ENCODE measurements at regions of chr12 and their contacts with region 1.

Region 1: GRCh38 chr12:28172434-28173030 is 17.7 kb upstream of the CCDC91 start:
- DNase-seq: peak; percentile 24
- H3K4me3 ChIP-seq: no peak overlapping the region
- CTCF ChIP-seq: peak; percentile 66

Region 2: DNA sequence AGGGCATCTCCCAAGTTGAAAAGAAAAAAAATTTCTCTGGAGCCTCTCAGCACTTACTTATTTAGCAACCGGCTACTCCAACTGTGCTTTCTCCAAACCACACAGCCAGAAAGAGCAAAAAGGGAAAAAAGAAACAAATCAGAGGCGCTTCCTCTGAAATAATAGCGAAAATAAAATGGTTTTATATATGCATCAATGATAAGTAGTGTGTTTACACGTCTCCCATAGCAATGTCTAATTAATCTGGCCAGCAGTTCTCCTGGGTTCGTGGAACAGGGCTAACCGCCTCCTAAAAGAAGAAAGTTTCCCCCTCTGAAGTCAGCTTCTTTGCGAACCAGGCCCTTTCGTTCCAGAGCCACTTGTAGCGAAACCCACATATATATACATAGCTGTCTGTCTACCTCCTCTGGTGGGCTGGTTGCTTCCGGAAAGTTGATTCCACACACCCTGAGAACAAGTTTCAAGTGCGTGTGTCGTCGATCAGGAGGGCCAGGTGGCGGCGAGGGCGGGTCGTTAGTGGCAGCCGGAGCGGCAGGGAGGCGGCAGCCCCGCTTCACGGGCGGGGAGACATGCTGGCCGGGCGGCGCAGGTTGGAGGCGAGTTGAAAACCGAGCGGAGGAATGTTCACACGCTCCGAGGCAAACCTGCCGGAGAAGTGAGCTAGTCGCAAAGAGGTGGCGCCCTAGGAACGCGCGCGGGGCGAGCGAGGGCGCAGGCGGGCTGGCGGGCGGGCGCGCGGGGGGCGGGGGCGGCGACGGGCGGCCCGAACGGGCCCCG is 202.7 kb before region 1 on chr12:
- CTCF ChIA-PET with region 1: interaction called, 12 read pairs
- POLR2A ChIA-PET with region 1: interaction called, 6 read pairs
- DNase-seq: no peak
- H3K4me3 ChIP-seq: peak overlapping the region; percentile 65
- CTCF ChIP-seq: peak; percentile 20

Region 3: GRCh38 chr12:28130625-28131598 is 41.6 kb before region 1 on chr12:
- CTCF ChIA-PET with region 1: interaction called, 13 read pairs
- POLR2A ChIA-PET with region 1: no interaction called
- DNase-seq: peak; percentile 99
- H3K4me3 ChIP-seq: no peak overlapping the region
- CTCF ChIP-seq: no peak

Region 4: DNA sequence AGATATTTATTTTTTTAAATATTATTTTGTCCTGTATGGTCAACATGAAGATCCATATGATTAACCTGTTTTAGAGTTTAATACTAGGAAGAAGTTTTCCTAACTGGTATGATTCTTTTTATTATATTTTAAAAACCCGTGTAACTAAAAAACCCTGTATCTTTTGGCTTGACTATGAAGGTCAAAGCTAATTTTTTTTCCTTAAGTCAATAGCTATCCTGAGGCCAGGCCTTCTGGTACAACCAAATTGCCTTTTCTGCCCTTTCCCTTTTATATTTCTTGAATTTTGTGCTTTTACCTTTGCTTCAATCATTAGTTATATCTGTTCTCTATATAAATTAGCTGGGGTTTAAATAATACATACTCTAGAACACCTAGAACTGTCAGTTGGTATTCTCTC is 12.8 kb before region 1 on chr12:
- CTCF ChIA-PET with region 1: interaction called, 10 read pairs
- POLR2A ChIA-PET with region 1: no interaction called
- DNase-seq: no peak
- H3K4me3 ChIP-seq: no peak overlapping the region
- CTCF ChIP-seq: no peak

Region 5: GRCh38 chr12:28232211-28232928 is 59.8 kb after region 1 on chr12:
- CTCF ChIA-PET with region 1: no interaction called
- POLR2A ChIA-PET with region 1: no interaction called
- DNase-seq: no peak
- H3K4me3 ChIP-seq: no peak overlapping the region
- CTCF ChIP-seq: no peak

Region 6: DNA sequence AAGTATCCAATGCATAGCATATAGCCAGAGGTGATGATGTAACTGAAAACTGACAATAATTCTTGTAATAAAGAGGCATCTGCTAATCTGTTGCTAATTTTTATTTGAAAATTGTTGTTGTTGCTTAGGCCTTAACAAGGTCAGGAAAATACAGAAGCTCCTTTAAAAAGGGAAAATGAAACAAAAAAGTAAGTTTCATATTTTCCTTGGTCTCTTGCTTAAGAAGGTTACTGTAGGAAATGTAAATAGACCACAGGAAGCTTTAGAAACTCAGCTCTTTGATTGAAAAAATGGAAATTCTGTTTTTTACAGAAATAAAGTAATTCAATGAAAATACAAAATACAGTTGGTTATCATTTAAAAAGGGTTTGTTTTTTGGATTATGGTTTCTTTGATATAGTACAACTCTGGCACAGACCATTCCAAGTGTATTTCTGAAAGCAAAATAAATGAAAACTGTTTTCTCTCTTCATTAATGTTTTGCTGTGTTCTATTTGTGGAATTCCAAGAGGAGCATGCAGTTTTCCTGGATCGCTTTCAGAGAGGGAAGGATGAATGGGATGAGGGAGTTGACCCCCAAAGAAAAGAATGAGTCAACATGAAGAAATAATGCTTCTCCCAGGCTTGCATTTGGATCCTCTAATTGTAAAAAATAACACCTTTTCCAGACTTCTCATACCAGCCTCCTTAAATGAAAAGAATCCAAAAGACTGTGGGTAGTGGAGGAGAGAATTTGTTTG is 578.6 kb after region 1 on chr12:
- CTCF ChIA-PET with region 1: no interaction called
- POLR2A ChIA-PET with region 1: no interaction called
- DNase-seq: no peak
- H3K4me3 ChIP-seq: no peak overlapping the region
- CTCF ChIP-seq: no peak